Right ventricle myocardium superior (tissue), 1 donor: ENCODE measurements at regions of chr5 and their contacts with region 1.

Region 1: GRCh38 chr5:133868946-133869518 is 99.4 kb downstream of the C5orf15 start:
- DNase-seq: peak; percentile 85
- ATAC-seq: peak; percentile 89

Region 2: DNA sequence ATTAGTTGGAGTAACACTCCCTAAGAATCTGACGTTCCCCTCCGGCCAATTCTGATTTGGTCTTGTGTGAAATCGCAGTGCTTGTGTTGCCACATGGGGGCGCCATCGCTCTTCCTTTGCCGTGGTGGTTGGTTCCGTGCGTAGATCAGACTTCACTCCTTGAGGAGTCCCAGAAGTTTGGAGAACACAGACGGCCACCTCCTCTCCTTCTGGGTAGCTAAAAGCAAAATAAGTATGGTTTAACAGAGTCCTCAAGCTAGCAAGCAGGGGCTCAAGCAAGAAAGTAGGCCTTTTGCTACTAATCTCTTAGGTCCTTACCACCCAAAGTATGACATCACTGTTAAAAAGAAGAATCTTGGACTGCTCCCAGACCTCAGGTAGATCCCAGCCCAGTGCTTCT is 757.7 kb before region 1 on chr5:
- intact Hi-C with region 1: loop called (anchors 5 kb)
- DNase-seq: peak; percentile 89
- ATAC-seq: peak; percentile 91

Region 3: GRCh38 chr5:133423618-133424282 is 445.3 kb before region 1 on chr5:
- intact Hi-C with region 1: loop called (anchors 5 kb)
- DNase-seq: peak; percentile 78
- ATAC-seq: peak; percentile 94

Region 4: GRCh38 chr5:133754575-133755169 is 114.4 kb before region 1 on chr5:
- intact Hi-C with region 1: loop called (anchors 5 kb)
- DNase-seq: no peak
- ATAC-seq: peak; percentile 60